ENCODE measurements at regions of chr2 and their contacts with region 1.

Region 1: GRCh38 chr2:96509114-96509846 is 4.1 kb upstream of the NEURL3 start:
- DNase-seq: peak; percentile 84
- H3K4me3 Mint-ChIP-seq: no peak overlapping the region
- H3K27ac Mint-ChIP-seq: no peak overlapping the region
- H3K4me1 Mint-ChIP-seq: peaks cover 16% of the 10 kb centered on the region
- H3K27me3 Mint-ChIP-seq: peaks cover 18% of the 10 kb centered on the region
- CTCF ChIP-seq: peak; percentile 97

Region 2: DNA sequence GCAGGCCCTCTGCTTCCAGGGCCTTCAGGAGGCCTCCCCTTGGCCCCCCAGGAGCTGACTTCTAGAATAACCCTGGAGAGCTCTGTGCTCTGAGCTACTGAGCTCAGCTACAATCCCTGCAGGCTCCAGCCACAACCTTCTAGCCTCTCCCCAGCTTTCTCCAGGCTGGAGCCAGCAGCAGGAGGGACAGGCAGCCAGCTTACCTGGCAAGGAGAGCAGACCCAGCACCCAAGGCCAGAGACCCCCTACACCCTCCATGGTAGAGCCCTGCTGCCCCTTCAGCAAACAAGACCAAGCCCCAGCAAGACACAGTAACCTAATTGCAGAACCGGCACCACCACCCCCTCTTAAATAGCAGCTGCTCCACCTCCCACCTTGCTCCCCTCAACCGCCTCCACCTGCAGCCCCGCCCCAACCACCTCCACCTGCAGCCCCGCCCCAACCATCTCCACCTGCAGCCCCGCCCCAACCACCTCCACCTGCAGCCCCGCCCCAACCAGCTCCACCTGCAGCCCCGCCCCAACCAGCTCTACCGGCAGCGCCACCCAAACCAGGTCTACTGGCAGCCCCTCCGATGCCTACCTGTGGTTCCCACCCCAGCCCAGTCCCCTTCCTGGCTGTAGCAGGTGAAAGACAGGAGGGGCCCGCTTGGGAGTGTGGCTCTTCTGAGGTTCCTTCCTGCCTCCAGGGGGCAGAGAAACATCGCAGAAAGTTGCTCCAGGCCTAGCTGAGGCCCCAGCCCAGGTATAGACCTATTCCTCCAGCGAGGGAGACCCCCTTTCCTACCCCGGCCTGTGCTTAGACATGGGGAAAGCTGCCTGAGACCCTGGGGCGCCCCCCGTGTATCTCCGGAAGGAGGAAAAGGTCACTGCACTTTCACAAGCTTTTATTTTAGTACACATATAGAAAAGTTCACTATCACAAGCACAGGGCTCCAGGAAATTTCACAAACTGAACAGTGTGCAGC is 370.8 kb before region 1 on chr2 and contains the start of gene ASTL:
- CTCF ChIA-PET with region 1: no interaction called
- POLR2A ChIA-PET with region 1: no interaction called
- intact Hi-C with region 1: loop called (anchors 5 kb)
- DNase-seq: peak; percentile 47
- H3K4me3 Mint-ChIP-seq: no peak within 1 kb of the TSS
- H3K27ac Mint-ChIP-seq: no peak within 1 kb of the TSS
- H3K4me1 Mint-ChIP-seq: no peaks in the 10 kb centered on the region
- H3K27me3 Mint-ChIP-seq: peaks cover 17% of the 10 kb centered on the region
- CTCF ChIP-seq: peak; percentile 49
- total RNA-seq, gene ASTL: not detected in 2 replicates

Region 3: DNA sequence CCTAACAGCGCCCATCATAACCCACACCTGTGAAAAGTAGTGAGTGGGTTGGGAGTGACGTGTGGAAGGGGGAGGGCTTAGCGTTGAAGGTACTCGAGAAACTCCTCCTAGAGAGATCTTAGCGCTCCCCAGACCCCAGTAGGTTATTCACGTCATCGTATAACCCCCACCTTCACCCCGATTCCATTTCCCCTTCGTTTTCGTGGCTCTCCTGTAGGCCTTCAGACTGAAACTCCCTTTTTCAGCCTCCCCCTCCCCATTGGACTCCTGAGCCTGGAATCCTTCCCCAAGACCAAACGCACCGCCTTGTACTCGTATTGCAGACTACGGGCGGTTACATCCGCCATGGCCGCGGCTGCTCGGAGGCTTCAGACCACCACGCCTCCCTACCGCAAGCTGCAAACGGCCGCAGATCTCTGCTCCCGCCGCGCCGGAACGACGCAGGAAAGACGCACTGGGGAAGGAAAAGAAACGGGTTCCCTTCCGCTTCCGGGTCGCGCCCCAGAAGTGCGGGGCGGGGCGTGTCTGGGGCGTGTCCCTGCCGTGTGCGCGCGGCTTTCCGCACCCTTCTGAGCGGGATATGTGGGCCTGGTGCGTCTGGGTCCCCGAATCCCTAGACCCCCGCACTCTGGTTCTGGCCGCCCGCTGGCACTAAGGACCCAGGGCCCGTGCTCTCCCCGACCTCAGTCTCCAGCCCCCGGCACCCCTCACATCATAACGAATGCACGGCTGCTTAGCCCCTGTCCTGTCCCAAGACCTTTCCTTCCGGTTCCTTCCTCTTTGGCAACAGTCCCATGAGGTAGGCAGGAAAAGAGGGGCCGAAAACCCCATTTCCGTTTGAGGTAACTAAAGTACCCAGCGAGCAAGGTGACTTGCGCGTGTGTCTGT is 203.9 kb before region 1 on chr2 and contains the start of gene SNRNP200:
- CTCF ChIA-PET with region 1: interaction called, 6 read pairs
- POLR2A ChIA-PET with region 1: interaction called, 7 read pairs
- intact Hi-C with region 1: loop called (anchors 1 kb)
- DNase-seq: peak; percentile 88
- H3K4me3 Mint-ChIP-seq: peak within 1 kb of the TSS; percentile 95
- H3K27ac Mint-ChIP-seq: peak within 1 kb of the TSS; percentile 96
- H3K4me1 Mint-ChIP-seq: peaks cover 25% of the 10 kb centered on the region
- H3K27me3 Mint-ChIP-seq: no peaks in the 10 kb centered on the region
- CTCF ChIP-seq: no peak
- total RNA-seq, gene SNRNP200: 115 and 116 TPM in 2 replicates

Region 4: GRCh38 chr2:96407041-96407918 is 102.0 kb before region 1 on chr2:
- CTCF ChIA-PET with region 1: interaction called, 360 read pairs
- POLR2A ChIA-PET with region 1: interaction called, 10 read pairs
- intact Hi-C with region 1: loop called (anchors 1 kb)
- DNase-seq: peak; percentile 76
- H3K4me3 Mint-ChIP-seq: no peak overlapping the region
- H3K27ac Mint-ChIP-seq: no peak overlapping the region
- H3K4me1 Mint-ChIP-seq: peaks cover 17% of the 10 kb centered on the region
- H3K27me3 Mint-ChIP-seq: peaks cover 12% of the 10 kb centered on the region
- CTCF ChIP-seq: peak; percentile 72

Region 5: GRCh38 chr2:96520231-96520630 is 11.0 kb after region 1 on chr2:
- CTCF ChIA-PET with region 1: interaction called, 21 read pairs
- POLR2A ChIA-PET with region 1: interaction called, 3 read pairs
- intact Hi-C with region 1: no loop called
- DNase-seq: no peak
- H3K4me3 Mint-ChIP-seq: no peak overlapping the region
- H3K27ac Mint-ChIP-seq: no peak overlapping the region
- H3K4me1 Mint-ChIP-seq: no peaks in the 10 kb centered on the region
- H3K27me3 Mint-ChIP-seq: no peaks in the 10 kb centered on the region
- CTCF ChIP-seq: no peak

Region 6: DNA sequence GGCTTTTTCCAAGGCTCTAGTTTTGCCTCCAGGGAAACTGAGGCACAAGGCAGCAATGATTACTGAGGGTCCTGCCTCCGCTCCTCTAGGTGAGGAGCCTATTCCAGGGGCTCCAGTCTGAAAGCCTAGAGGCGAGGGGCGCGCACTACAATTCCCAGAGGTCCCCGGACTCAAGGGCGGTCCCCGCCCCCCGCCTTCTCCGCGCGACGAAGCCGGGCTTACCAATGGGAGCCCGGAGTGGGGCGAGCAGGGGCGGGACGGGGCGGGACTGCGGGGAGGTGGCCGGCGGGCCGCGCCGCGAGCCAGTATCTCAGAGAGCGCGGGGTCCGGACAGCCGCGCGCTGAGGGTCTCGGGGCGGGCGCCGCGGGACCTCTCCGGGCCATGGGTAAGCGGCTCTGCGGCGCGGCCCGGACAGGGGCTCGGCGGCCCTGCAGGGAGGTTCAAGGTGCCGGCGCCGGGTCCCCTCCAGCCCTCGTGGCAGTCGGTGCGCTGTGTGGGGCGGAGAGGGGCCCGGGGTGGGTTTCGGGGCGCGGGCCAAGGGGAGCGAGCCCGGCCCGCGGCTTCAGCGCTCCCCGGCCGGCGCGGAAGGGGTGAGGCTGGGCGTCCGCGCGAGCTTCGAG is 27.3 kb after region 1 on chr2 and contains the start of gene ARID5A:
- CTCF ChIA-PET with region 1: interaction called, 6 read pairs
- POLR2A ChIA-PET with region 1: interaction called, 3 read pairs
- intact Hi-C with region 1: loop called (anchors 1 kb)
- DNase-seq: peak; percentile 82
- H3K4me3 Mint-ChIP-seq: peak within 1 kb of the TSS; percentile 76
- H3K27ac Mint-ChIP-seq: no peak within 1 kb of the TSS
- H3K4me1 Mint-ChIP-seq: peaks cover 30% of the 10 kb centered on the region
- H3K27me3 Mint-ChIP-seq: no peaks in the 10 kb centered on the region
- CTCF ChIP-seq: no peak
- total RNA-seq, gene ARID5A: 3.0 and 3.4 TPM in 2 replicates

Region 7: DNA sequence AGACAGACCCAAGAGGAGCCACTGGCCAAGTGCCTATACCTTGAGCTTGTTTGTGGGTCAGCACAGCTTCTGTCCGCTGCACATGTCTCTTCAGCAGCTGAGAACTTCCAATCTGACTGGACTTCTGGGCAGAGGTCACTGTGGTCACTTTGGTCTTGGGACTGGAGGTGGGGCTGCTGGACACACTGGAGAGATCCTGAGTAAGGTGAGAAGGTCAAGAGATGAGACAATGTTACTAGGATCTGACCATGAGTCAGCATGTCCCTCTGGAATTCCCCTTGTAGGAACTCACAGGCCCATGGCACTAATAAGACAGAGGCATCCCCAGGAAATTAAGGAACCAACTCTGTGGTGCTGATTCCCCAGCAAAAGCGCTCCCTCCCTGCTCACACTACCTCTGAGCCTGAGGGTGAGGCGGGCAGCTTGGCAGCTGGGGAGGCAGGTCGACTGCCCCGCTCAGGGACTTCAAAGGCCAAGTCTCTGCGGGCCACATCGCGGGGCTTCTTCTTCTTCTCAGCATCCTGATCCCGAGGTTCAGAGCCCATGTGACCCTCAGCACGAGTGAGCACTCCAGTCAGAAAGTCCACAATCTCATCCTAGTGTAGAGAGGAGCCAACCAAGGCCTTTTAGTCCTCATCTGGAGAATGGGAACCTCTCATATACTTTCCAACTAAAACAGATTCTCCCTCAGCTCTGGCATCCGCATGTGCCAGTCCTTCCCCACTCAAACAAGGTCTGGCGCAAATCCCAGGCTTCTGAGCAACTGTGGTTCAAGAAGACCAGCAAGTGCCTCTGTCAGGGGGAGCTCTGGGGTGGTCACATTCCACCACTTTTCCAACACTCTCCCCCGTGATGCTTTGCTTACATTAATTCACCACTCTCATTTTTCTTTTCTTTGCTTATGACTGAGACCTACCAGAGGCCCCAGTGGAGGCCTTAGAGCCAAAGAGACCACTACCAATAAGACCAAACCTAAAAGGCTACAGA is 99.5 kb after region 1 on chr2:
- CTCF ChIA-PET with region 1: no interaction called
- POLR2A ChIA-PET with region 1: no interaction called
- intact Hi-C with region 1: no loop called
- DNase-seq: peak; percentile 21
- H3K4me3 Mint-ChIP-seq: no peak overlapping the region
- H3K27ac Mint-ChIP-seq: no peak overlapping the region
- H3K4me1 Mint-ChIP-seq: no peaks in the 10 kb centered on the region
- H3K27me3 Mint-ChIP-seq: no peaks in the 10 kb centered on the region
- CTCF ChIP-seq: no peak

Measured in MCF 10A (cell line).